ENCODE measurements at regions of chr9 and their contacts with region 1.

Region 1: DNA sequence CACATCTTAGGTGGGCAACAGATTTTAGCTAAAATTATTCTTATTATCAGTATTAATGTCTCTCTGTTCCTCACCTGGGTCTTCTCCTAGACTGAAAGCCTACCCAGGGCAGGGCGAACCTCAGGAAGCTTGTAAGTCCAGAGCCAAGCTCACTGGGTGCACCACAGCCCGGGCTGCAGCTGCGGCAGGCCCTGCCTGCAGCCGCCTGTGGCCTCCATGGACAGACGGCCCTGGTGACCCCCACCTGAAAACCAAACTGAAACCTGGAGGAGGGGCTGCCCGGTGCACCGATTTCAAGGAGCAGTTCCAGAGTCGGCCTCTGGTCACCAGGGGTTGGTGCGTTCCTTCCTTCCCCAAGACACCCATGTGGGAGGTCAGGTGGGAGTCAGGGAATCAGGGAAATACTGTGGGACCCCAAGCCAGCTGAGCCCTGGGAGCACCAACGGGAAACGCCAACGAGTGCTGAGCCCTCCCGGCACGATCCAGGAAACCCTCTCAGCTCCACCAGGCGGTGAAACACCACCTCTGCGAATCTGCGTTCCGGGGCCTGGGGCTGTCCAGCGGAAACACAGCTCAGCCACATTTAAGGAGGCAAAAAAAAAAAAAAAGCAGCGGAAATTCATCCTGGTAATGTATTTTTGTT is 68.6 kb upstream of the PPP1R26 start:
- DNase-seq: peak; percentile 26
- H3K4me3 ChIP-seq: no peak overlapping the region
- H3K27ac ChIP-seq: no peak overlapping the region
- H3K4me1 ChIP-seq: no peaks in the 10 kb centered on the region; a peak in 1 of 4 replicates
- H3K27me3 ChIP-seq: no peaks in the 10 kb centered on the region
- CTCF ChIP-seq: no peak
- EP300 ChIP-seq: no peak
- RAD21 ChIP-seq: no peak

Region 2: GRCh38 chr9:135077497-135078200 is 333.3 kb before region 1 on chr9:
- CTCF ChIA-PET with region 1: interaction called, 290 read pairs
- POLR2A ChIA-PET with region 1: no interaction called
- DNase-seq: no peak
- H3K4me3 ChIP-seq: no peak overlapping the region
- H3K27ac ChIP-seq: no peak overlapping the region
- H3K4me1 ChIP-seq: peaks cover 0 to 6% of the 10 kb centered on the region in 2 experiments; a peak in 1 of 4 replicates
- H3K27me3 ChIP-seq: no peaks in the 10 kb centered on the region
- CTCF ChIP-seq: no peak
- EP300 ChIP-seq: no peak
- RAD21 ChIP-seq: no peak

Region 3: DNA sequence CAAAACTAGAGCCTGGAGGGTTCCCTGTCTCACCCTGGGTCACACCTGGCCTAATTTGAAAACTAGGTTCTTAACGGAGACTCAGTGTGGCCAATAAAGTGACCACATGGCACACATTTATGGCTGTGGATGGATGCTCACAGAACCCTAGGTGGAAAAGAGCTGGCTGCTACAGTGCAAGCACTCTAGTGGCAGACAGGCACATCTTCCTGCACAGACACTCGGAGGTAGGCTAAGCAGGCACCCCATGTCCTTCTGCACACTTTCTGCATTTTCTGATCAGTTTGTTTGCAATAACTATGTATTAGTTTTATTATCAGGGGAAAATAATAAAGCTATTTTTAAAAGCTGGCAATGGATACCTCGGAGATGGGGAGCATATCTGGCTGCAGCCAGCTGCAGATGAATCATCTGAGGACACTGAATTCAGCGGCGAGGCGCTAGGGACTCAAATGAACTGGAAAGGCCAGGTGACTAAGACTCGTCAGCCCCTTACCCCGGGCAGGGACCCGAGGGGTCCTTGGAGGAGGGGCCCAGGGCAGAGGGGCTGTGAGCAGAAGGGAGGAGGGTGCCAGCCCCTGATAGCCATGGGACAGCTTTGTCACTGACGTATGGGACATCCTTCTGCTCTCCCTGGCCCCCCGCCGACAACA is 227.3 kb before region 1 on chr9:
- CTCF ChIA-PET with region 1: interaction called, 12 read pairs
- POLR2A ChIA-PET with region 1: no interaction called
- DNase-seq: no peak
- H3K4me3 ChIP-seq: no peak overlapping the region
- H3K27ac ChIP-seq: no peak overlapping the region; a peak in 1 of 4 replicates
- H3K4me1 ChIP-seq: peaks cover 0 to 34% of the 10 kb centered on the region in 2 experiments; a peak in 1 of 4 replicates
- H3K27me3 ChIP-seq: no peaks in the 10 kb centered on the region
- CTCF ChIP-seq: no peak
- EP300 ChIP-seq: no peak
- RAD21 ChIP-seq: no peak

Region 4: GRCh38 chr9:135343837-135344522 is 67.0 kb before region 1 on chr9:
- CTCF ChIA-PET with region 1: interaction called, 84 read pairs
- POLR2A ChIA-PET with region 1: no interaction called
- DNase-seq: peak; percentile 93
- H3K4me3 ChIP-seq: peak overlapping the region in 1 of 2 experiments; percentile 53; a peak in 1 of 4 replicates
- H3K27ac ChIP-seq: no peak overlapping the region
- H3K4me1 ChIP-seq: peaks cover 0 to 15% of the 10 kb centered on the region in 2 experiments; a peak in 2 of 4 replicates
- H3K27me3 ChIP-seq: no peaks in the 10 kb centered on the region
- CTCF ChIP-seq: peak; percentile 32
- EP300 ChIP-seq: no peak
- RAD21 ChIP-seq: peak; percentile 90

Region 5: DNA sequence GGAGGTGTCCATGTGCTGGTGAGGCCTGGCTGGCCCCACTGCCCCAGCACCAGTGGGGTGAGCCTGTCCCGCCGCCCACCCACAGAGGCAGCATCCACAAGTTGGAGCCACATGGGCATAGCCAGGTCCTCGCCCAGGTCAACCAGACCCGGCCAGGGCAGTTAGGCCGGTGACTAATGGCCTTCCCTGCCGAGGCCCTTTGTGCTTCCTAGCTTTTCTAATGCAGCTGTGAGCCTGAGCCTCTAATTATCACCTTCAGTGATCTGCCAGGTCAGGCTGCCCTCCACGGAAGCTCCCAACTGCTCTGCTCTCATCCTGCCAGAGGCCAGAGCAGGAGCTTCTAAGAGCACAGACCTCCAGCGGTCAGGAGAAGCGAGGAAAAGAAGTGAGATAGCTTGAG is 18.5 kb before region 1 on chr9:
- CTCF ChIA-PET with region 1: interaction called, 23 read pairs
- POLR2A ChIA-PET with region 1: no interaction called
- DNase-seq: no peak
- H3K4me3 ChIP-seq: no peak overlapping the region
- H3K27ac ChIP-seq: no peak overlapping the region
- H3K4me1 ChIP-seq: no peaks in the 10 kb centered on the region
- H3K27me3 ChIP-seq: no peaks in the 10 kb centered on the region
- CTCF ChIP-seq: no peak
- EP300 ChIP-seq: no peak
- RAD21 ChIP-seq: no peak

Region 6: GRCh38 chr9:135692410-135692809 is 281.5 kb after region 1 on chr9:
- CTCF ChIA-PET with region 1: no interaction called
- POLR2A ChIA-PET with region 1: no interaction called
- DNase-seq: no peak
- H3K4me3 ChIP-seq: no peak overlapping the region
- H3K27ac ChIP-seq: no peak overlapping the region
- H3K4me1 ChIP-seq: no peaks in the 10 kb centered on the region
- H3K27me3 ChIP-seq: no peaks in the 10 kb centered on the region
- CTCF ChIP-seq: no peak
- EP300 ChIP-seq: no peak
- RAD21 ChIP-seq: no peak

Measured in SK-N-SH (cell line).